ENCODE measurements at regions of chr1 and their contacts with region 1.

Region 1: GRCh38 chr1:181142096-181142958 is 53.8 kb downstream of the IER5 start:
- DNase-seq: peak; percentile 95
- ATAC-seq: peak; percentile 76
- H3K4me3 Mint-ChIP-seq: peak overlapping the region; percentile 29
- H3K27ac Mint-ChIP-seq: peak overlapping the region; percentile 89
- H3K4me1 Mint-ChIP-seq: peaks cover 46% of the 10 kb centered on the region
- H3K27me3 Mint-ChIP-seq: peaks cover 3% of the 10 kb centered on the region
- CTCF ChIP-seq: peak; percentile 95

Region 2: DNA sequence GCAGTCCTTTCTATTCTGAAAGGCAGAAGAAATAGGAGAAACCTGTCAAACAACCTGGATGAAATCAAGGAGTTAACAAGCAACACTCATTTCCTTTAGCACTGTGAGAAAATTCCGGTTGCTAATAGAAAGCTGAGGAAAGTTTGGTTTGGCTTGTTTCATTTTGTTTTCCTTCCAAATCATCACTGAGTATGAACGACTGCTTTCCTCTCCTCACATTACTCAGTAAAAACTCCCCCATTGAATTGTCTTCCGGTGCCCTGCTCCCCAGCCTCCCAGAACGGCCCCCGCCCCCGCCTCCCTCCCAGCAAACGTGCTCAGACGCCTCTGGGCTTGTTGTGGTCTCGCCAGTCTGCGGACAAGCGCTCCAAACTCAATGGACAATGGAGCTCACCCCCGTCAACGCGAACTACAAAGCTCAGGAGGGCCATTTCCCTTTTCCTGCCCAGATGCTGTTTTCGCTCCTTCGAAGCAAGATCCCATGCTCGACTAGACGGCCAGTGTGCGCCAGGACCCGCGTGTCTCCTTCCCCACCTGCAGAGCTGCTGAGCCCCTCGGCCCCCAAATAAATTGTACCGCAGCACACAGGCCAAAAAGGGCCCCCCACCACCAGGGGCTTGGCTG is 120.4 kb before region 1 on chr1:
- CTCF ChIA-PET with region 1: interaction called, 19 read pairs
- POLR2A ChIA-PET with region 1: interaction called, 17 read pairs
- intact Hi-C with region 1: no loop called
- DNase-seq: peak; percentile 80
- ATAC-seq: peak; percentile 48
- H3K4me3 Mint-ChIP-seq: peak overlapping the region; percentile 97
- H3K27ac Mint-ChIP-seq: peak overlapping the region; percentile 97
- H3K4me1 Mint-ChIP-seq: peaks cover 40% of the 10 kb centered on the region
- H3K27me3 Mint-ChIP-seq: no peaks in the 10 kb centered on the region
- CTCF ChIP-seq: no peak

Region 3: DNA sequence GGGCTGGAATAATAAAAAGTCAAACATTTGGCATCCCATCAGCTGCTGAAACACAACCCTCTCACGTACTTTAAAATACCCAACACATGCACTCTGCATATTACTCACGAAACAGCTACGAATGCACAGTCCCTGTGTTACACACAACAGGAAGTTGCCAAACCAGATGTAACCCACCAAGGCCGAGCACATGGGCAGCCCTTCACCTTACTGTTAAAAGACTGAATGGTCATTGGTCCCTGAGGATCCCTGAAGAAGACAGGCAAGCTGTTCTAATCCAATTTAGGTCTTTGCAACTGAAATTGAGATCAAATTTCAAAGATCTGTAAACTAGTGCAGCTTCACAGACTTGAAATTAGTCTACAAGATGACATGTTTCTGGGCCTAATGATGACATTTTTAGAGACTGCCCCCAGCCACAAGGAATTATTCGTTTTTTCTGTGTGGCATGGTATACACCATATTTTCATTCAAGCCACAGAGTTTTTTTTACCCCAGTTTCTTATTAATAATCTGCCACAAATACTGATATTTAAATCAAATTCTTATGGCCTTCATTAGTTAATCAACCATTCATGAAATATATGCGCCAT is 79.4 kb before region 1 on chr1:
- CTCF ChIA-PET with region 1: interaction called, 18 read pairs
- POLR2A ChIA-PET with region 1: interaction called, 8 read pairs
- intact Hi-C with region 1: no loop called
- DNase-seq: peak; percentile 80
- ATAC-seq: peak; percentile 93
- H3K4me3 Mint-ChIP-seq: peak overlapping the region; percentile 61
- H3K27ac Mint-ChIP-seq: peak overlapping the region; percentile 88
- H3K4me1 Mint-ChIP-seq: peaks cover 20% of the 10 kb centered on the region
- H3K27me3 Mint-ChIP-seq: no peaks in the 10 kb centered on the region
- CTCF ChIP-seq: no peak

Region 4: GRCh38 chr1:181088079-181089016 is 54.0 kb before region 1 on chr1 and contains the start of gene IER5:
- CTCF ChIA-PET with region 1: interaction called, 179 read pairs
- POLR2A ChIA-PET with region 1: interaction called, 125 read pairs
- intact Hi-C with region 1: loop called (anchors 2 kb)
- DNase-seq: peak; percentile 96
- ATAC-seq: peak; percentile 80
- H3K4me3 Mint-ChIP-seq: peak within 1 kb of the TSS; percentile 100
- H3K27ac Mint-ChIP-seq: peak within 1 kb of the TSS; percentile 100
- H3K4me1 Mint-ChIP-seq: peaks cover 40% of the 10 kb centered on the region
- H3K27me3 Mint-ChIP-seq: no peaks in the 10 kb centered on the region
- CTCF ChIP-seq: no peak
- total RNA-seq, gene IER5: 39.8 to 41.3 TPM

Region 5: DNA sequence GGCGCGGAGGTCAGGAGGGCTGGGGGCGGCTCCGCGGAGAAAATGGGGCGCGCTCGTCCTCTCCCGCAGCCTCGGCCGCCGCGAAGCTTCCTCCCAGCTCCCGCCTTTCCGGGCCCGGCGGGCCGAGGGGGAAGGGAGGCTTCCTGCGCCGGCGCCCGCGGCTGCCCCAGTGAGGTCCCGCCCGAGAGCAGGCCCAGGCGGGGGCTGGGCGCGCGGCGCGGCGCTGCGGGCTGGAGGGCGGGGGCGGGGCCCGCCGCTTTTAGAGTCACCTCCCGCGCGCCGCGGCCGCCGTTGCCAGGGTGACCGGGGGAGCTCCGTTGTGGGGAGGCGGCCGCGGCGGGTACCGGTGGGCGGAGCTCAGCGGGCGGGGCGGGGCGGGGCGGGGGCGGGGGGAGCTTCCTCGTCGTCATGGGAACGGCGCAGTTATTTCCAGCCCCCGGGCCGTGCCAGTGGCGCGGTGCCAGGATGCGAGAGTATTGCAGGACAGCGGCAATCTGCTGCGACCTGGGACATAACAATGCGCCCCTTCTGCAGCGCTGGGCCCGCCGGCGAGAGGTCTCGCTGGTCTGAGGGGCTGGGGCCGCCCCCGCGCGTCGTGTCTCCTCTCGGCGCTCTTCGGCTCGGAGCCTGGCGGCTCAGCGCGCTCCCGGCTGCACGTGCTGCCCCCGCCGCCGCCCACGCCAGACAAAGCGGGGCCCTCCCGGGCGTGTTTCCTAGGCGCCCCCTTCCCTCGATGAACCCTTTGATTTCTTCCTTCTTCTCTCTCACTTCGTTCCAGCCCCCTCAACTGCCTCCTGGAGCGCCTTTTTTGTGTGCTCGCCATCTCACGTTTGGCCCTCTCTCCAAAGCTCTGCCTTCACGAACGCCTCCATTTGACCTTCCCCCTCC is 36.9 kb before region 1 on chr1:
- CTCF ChIA-PET with region 1: interaction called, 58 read pairs
- POLR2A ChIA-PET with region 1: interaction called, 45 read pairs
- intact Hi-C with region 1: no loop called
- DNase-seq: peak; percentile 92
- ATAC-seq: peak; percentile 83
- H3K4me3 Mint-ChIP-seq: peak overlapping the region; percentile 77
- H3K27ac Mint-ChIP-seq: peak overlapping the region; percentile 71
- H3K4me1 Mint-ChIP-seq: peaks cover 53% of the 10 kb centered on the region
- H3K27me3 Mint-ChIP-seq: peaks cover 11% of the 10 kb centered on the region
- CTCF ChIP-seq: no peak

Region 6: GRCh38 chr1:181152892-181153633 is 10.7 kb after region 1 on chr1:
- CTCF ChIA-PET with region 1: interaction called, 66 read pairs
- POLR2A ChIA-PET with region 1: interaction called, 4 read pairs
- intact Hi-C with region 1: no loop called
- DNase-seq: no peak
- ATAC-seq: no peak
- H3K4me3 Mint-ChIP-seq: no peak overlapping the region
- H3K27ac Mint-ChIP-seq: no peak overlapping the region
- H3K4me1 Mint-ChIP-seq: peaks cover 38% of the 10 kb centered on the region
- H3K27me3 Mint-ChIP-seq: peaks cover 2% of the 10 kb centered on the region
- CTCF ChIP-seq: no peak

Region 7: GRCh38 chr1:181166377-181167196 is 24.3 kb after region 1 on chr1:
- CTCF ChIA-PET with region 1: interaction called, 66 read pairs
- POLR2A ChIA-PET with region 1: interaction called, 4 read pairs
- intact Hi-C with region 1: no loop called
- DNase-seq: peak; percentile 88
- ATAC-seq: peak; percentile 100
- H3K4me3 Mint-ChIP-seq: no peak overlapping the region
- H3K27ac Mint-ChIP-seq: peak overlapping the region; percentile 71
- H3K4me1 Mint-ChIP-seq: peaks cover 4% of the 10 kb centered on the region
- H3K27me3 Mint-ChIP-seq: no peaks in the 10 kb centered on the region
- CTCF ChIP-seq: peak; percentile 92